Activated CD4-positive, alpha-beta T cell treated with anti-CD3 and anti-CD28 coated beads for 36 hours (primary cell): ENCODE measurements at regions of chr17 and their contacts with region 1.

Region 1: DNA sequence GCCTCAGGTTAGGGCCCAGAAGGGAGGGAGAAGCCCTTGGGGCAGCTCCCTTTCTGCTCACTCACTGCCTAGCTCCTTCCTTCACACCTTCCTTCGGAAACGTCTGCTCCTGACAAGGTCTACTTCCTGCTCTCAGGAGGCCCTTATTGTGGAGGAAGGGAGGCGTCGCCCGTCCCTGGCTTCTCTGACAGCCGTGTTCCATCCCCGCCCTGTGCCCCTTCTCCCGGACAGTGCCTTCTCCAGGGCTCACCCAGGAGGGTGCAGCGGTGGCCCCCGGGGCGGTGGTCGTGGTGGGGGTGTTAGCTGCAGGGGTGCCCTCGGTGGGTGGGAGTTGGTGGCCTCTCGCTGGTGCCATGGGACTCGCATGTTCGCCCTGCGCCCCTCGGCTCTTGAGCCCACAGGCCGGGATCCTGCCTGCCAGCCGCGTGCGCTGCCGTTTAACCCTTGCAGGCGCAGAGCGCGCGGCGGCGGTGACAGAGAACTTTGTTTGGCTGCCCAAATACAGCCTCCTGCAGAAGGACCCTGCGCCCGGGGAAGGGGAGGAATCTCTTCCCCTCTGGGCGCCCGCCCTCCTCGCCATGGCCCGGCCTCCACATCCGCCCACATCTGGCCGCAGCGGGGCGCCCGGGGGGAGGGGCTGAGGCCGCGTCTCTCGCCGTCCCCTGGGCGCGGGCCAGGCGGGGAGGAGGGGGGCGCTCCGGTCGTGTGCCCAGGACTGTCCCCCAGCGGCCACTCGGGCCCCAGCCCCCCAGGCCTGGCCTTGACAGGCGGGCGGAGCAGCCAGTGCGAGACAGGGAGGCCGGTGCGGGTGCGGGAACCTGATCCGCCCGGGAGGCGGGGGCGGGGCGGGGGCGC is 231.9 kb downstream of the SEC14L1 start:
- DNase-seq: peak; percentile 78
- ATAC-seq: peak; percentile 17
- H3K4me3 Mint-ChIP-seq: peak overlapping the region; percentile 67
- H3K27ac Mint-ChIP-seq: peak overlapping the region; percentile 74
- H3K4me1 Mint-ChIP-seq: peaks cover 61% of the 10 kb centered on the region
- H3K27me3 Mint-ChIP-seq: no peaks in the 10 kb centered on the region

Region 2: DNA sequence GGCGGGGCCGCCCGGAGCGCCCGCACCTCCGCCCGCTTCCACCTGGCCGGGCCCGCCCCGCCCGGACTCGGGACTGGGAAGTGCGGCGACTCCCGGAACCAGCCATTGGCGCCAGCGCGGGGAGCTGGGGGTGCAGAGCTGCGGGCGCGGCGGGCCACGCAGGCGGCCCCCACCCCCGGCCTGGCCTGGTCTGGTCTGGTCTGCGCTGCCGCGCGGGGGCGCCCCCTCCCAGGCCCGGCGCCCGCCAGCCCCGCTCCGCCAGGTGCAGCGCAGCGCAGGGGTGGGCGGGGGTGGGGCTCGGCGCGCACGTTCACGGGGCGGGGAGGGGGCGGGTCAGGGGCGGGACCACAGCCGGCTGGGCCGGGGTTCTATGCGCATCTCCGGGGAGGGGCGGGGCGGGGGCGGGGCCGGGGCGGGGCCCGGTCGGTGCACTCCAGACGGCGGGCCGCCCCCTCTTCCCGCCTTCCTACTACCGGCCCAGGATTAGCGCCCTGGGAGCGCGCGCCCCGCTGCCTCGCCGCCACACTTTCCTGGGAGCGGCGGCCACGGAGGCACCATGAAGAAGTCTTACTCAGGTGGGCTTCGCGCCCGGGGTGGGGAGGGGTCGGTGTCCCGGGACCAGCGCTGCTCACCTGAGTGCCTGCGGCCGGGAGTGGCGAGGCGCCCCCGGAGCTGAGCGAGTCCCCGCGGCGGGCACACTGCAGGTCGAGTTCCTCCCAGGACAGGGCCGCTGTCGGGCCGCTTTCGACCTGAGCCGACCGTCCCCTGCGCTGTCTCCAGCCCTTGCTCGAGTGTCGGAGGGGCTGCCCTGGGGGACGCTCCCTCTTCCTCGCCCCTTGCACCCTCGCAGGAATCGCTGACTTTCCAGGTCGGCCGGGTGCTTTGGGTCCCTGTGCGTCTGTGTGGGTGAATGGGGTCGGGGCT is 91.4 kb before region 1 on chr17:
- CTCF ChIA-PET with region 1: no interaction called
- POLR2A ChIA-PET with region 1: no interaction called
- intact Hi-C with region 1: loop called in 1 of 2 experiments (anchors 5 kb)
- DNase-seq: peak; percentile 79
- ATAC-seq: peak; percentile 90
- H3K4me3 Mint-ChIP-seq: peak overlapping the region; percentile 68
- H3K27ac Mint-ChIP-seq: peak overlapping the region; percentile 51
- H3K4me1 Mint-ChIP-seq: peaks cover 20% of the 10 kb centered on the region
- H3K27me3 Mint-ChIP-seq: peaks cover 14% of the 10 kb centered on the region

Region 3: DNA sequence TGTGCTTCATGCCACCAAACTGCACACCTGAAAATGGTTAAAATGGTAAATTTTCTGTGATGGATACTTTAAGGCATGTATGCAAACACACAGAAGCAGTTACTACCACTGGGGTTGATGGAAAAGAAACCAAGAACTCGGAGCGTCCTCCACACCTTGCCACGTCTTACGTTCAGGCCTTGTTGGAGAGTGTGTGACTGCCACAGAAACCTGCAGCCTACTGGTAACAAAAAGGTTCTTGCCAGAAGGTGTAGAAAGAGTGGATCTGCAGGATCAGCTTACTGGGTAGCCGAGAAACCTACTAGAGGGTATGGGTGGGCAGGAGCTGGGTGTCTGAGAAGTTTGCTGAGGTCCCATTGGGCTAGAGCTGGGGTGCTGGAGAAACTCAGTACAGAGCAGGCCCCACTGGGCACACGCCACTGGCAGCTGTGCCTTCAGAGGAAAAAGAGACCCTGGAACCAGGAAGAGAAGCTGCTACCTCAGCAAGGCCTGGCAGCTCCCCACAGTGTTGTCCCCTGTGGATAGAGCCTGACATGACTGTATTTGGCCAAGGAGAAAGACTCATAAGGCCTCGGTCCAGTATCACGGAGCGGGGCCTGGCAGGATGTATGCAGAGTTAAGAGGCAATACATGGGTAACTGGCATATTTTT is 27.3 kb before region 1 on chr17:
- CTCF ChIA-PET with region 1: no interaction called
- POLR2A ChIA-PET with region 1: interaction called, 3 read pairs
- intact Hi-C with region 1: loop called in 1 of 2 experiments (anchors 2 kb)
- DNase-seq: no peak
- ATAC-seq: no peak
- H3K4me3 Mint-ChIP-seq: no peak overlapping the region
- H3K27ac Mint-ChIP-seq: no peak overlapping the region
- H3K4me1 Mint-ChIP-seq: peaks cover 51% of the 10 kb centered on the region
- H3K27me3 Mint-ChIP-seq: no peaks in the 10 kb centered on the region

Region 4: DNA sequence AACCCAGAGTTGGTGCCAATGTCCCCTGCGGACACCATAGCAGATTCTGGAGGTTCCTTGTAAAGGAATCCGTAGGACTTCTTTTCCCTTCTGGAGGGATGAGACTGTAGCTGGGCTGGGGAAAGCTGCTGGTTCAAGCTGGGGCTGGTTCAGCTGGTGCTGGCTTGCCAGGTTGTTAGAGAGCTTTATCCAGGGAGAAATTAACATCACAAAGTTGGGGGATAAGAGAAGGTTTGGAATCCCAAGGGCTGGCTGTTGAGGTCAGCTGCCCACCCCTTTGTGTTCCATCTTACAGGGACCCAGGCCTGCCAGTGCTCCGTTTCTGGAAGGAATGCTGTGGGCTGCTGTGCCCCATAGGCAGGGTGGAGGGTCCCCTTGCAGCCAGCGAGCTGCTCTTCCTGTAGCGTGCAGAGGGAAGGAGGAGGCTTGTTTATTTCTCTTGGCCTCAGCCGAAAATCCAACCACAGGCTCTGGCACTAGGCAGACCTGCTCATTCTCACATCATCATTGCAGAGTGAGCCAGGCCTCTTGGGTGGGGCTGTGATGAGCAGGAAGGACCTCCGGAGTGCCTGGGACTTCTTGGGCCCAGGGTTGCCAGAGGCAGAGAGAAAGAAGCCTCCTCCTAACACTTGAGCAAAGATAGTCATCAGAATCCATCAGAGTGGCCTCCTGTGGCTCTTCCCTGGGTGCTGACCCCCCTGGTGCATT is 19.2 kb after region 1 on chr17:
- CTCF ChIA-PET with region 1: interaction called, 5 read pairs
- POLR2A ChIA-PET with region 1: interaction called, 6 read pairs
- intact Hi-C with region 1: loop called (anchors 1 to 2 kb)
- DNase-seq: peak; percentile 67
- ATAC-seq: peak; percentile 34
- H3K4me3 Mint-ChIP-seq: peak overlapping the region; percentile 78
- H3K27ac Mint-ChIP-seq: peak overlapping the region; percentile 58
- H3K4me1 Mint-ChIP-seq: peaks cover 71% of the 10 kb centered on the region
- H3K27me3 Mint-ChIP-seq: no peaks in the 10 kb centered on the region

Region 5: GRCh38 chr17:77456951-77457548 is 84.4 kb after region 1 on chr17:
- CTCF ChIA-PET with region 1: interaction called, 3 read pairs
- POLR2A ChIA-PET with region 1: interaction called, 3 read pairs
- intact Hi-C with region 1: loop called in 1 of 2 experiments (anchors 2 kb)
- DNase-seq: peak; percentile 68
- ATAC-seq: no peak
- H3K4me3 Mint-ChIP-seq: peak overlapping the region; percentile 96
- H3K27ac Mint-ChIP-seq: peak overlapping the region; percentile 98
- H3K4me1 Mint-ChIP-seq: peaks cover 47% of the 10 kb centered on the region
- H3K27me3 Mint-ChIP-seq: no peaks in the 10 kb centered on the region

Region 6: GRCh38 chr17:77494664-77495435 is 122.2 kb after region 1 on chr17:
- CTCF ChIA-PET with region 1: interaction called, 10 read pairs
- POLR2A ChIA-PET with region 1: no interaction called
- intact Hi-C with region 1: no loop called
- DNase-seq: peak; percentile 84
- ATAC-seq: peak; percentile 58
- H3K4me3 Mint-ChIP-seq: no peak overlapping the region
- H3K27ac Mint-ChIP-seq: peak overlapping the region; percentile 63
- H3K4me1 Mint-ChIP-seq: peaks cover 4% of the 10 kb centered on the region
- H3K27me3 Mint-ChIP-seq: no peaks in the 10 kb centered on the region